Left cardiac atrium (tissue), 4 donors: ENCODE measurements at regions of chr3 and their contacts with region 1.

Region 1: DNA sequence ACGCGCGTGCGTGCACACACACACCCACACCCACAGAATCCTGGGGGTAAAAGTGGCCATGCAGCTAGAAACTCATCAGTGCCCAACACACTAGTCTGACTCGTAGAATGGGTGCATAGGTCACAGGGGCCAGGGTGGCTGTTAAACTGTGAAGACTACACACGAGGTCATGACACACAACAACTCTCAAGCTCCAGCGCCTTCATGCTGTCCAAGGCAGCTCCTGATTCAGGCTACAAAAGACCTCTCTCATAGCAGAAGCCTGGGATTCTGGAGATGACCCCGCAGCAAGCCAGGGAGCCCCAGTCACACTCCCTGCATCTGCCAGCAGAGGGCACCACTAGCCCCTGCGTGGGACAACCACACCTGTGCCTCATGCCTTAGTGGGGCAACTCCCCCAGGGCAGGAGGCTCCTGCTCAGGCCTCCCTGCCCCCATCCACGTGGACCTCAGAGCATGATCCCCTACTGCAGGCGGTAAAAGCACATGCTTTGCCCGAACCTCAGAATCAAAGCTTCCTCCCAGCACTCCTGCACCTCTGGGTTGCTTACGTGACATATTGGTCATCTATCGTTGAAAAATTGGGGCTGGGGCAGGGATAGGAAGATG is 93.1 kb downstream of the LRIG1 start:
- DNase-seq: peak; percentile 77
- ATAC-seq: peak; percentile 63 to 64

Region 2: DNA sequence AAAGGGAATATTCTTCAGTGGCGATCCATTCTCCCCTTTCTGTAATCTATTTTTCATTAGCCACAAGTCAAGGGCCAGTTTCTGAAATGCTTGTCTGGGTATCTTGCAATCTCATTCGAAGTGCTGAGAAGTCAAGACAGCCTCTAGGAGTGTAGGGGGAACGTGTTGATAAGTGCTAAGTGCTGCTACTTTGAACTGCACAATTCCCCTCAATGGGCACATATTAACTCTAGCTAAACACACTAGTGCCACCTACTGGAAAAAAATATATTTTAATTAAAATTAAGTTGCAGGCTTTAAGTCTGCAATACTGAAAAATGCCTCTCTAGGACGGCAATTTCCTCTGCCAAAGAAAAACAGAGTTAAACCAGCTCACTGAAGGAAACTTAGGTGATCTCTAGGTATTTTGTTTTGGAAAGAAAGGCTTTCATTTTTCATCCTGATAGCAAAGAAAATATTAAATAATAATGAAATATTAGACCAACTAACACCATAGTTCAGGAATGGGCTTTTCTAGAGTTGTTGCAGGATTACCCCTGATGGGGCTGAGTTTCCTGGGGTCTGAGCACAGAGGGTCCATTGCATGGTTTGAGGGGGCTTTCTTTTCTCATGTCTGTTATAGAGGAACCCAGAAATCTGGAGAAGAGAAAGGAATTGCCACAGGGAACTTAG is 408.5 kb after region 1 on chr3:
- intact Hi-C with region 1: loop called (anchors 2 to 5 kb)
- DNase-seq: no peak
- ATAC-seq: peak; percentile 87 to 90